GM13976 (cell line): ENCODE measurements at regions of chr2 and their contacts with region 1.

Region 1: GRCh38 chr2:131413148-131413747 is 49.3 kb upstream of the RAB6D start:
- DNase-seq: peak; percentile 44
- CTCF ChIP-seq: peak; percentile 63

Region 2: DNA sequence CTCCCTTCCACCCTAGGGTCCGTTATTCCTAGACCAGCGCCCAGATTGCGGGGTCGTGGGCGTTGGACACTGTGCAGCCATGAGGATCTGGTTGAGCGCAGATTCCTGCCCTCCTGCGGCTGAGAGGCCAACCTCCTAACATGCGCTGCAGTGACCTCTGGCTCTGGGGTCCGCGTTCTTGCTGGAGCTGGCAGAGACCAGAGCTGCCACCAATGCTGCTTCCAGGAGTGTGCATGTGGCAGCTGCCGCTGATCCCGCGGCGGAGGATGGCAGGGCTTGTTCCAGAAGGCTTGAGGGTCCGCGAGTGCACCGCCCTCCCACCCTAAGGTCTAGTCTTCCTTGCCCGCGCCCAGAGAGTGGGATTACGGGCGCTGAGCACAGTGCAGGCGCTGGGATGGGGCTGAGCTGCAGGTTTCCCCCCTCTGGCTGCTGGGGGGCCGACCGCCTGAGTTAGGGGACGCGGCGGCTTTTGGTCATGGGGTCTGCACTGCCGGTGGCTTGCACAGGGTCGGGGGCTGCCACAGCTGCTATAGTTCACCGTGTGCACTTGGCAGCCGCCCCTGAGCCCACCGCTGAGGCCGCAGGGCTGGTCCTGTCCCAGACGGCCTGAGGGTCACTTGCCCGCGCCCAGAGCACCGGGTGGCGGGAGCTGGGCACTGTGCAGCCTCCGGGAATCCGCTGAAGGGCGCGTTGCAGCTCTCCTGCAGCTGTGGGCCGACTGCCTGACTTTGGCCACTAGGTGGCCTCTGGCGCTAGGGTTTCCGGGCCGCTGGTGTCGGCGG is 260.3 kb after region 1 on chr2:
- in situ Hi-C with region 1: loop called (anchors 25 kb)
- DNase-seq: peak; percentile 78
- CTCF ChIP-seq: peak; percentile 92

Region 3: GRCh38 chr2:131801210-131801744 is 388.0 kb after region 1 on chr2:
- in situ Hi-C with region 1: loop called (anchors 25 kb)
- DNase-seq: peak; percentile 5
- CTCF ChIP-seq: no peak